Psoas muscle (tissue), 8 donors: ENCODE measurements at regions of chr3 and their contacts with region 1.

Region 1: DNA sequence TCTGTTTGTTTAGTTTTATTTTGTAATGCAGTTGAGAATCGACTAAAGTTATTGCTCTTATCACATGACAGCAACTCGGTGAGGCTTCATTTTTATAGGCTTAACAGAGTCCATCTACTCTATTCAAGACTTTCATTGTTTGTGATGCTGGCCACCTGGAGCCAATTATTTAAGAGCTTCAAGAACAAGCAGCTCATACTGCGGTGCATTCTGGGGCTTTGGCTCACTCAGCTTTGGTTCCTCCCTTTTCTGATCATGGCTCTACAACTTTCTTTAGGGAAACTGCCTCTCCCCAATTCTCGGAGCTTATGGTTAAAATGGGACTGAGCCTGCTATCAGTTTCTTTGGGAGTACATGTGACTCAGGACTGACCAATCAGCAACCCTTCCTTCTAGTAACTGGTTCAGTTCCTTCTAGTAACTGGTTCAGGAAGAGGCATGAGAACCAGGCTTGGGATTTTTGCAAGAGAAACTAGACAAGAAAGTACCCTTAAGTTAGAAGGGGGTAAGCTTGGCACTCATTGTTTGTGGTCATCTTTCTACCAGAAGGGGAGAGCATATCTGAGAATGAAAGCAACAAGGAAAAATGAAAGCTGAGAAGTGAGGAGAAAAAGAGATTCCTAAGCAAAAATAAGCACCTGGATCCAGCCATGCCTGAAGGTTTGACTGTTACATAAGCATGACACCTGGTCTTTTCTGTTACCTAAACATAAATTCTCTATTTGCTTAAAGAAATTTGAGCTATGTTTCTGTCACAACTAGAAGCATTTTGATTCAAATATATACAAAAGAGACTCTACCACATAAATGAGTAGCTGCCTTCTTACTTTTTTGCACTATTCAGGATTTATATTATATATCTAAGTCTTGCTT is 24.1 kb upstream of the ARHGEF3 start:
- DNase-seq: no peak
- ATAC-seq: no peak
- H3K4me3 ChIP-seq: no peak overlapping the region
- H3K27ac ChIP-seq: no peak overlapping the region
- H3K4me1 ChIP-seq: no peaks in the 10 kb centered on the region
- H3K27me3 ChIP-seq: no peaks in the 10 kb centered on the region
- CTCF ChIP-seq: no peak

Region 2: GRCh38 chr3:56837196-56837955 is 11.6 kb after region 1 on chr3:
- intact Hi-C with region 1: loop called in 1 of 2 experiments (anchors 1 kb)
- DNase-seq: no peak
- ATAC-seq: no peak
- H3K4me3 ChIP-seq: no peak overlapping the region
- H3K27ac ChIP-seq: no peak overlapping the region
- H3K4me1 ChIP-seq: no peaks in the 10 kb centered on the region
- H3K27me3 ChIP-seq: no peaks in the 10 kb centered on the region
- CTCF ChIP-seq: no peak

Region 3: DNA sequence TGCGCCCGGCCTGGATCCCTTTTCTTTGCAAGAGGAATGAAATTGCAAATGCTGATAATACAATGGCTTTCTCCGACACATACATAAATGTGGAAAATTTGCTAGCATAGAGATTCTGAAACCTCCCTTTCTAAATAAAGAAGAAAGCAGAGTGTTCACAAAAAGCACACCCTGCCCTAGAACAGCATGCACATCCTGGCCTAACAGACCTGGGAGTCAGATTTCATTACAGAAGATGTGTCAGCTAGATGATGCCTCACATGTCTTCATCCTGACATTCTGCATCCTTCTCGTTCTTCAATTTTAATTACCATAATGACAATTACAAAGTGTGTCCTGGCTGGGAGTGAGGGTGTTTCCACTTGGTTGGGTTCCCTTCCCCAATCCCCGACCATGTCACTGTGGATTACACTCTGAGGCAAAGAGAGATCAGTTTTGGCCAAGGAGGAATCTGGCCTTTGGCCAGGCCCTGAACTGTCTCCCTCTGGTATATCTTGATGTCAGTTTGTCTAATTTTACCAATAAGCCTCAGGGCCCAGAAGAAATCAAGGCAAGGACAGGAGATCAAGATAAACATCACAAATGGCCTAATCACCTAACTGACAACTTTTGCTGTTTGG is 129.8 kb after region 1 on chr3:
- intact Hi-C with region 1: loop called in 1 of 2 experiments (anchors 10 kb)
- DNase-seq: no peak
- ATAC-seq: peak in 2 of 4 donors; percentile 37 to 90
- H3K4me3 ChIP-seq: no peak overlapping the region
- H3K27ac ChIP-seq: no peak overlapping the region
- H3K4me1 ChIP-seq: no peaks in the 10 kb centered on the region
- H3K27me3 ChIP-seq: no peaks in the 10 kb centered on the region
- CTCF ChIP-seq: no peak

Region 4: GRCh38 chr3:56976651-56977560 is 151.1 kb after region 1 on chr3:
- intact Hi-C with region 1: no loop called
- DNase-seq: no peak
- ATAC-seq: no peak
- H3K4me3 ChIP-seq: no peak overlapping the region
- H3K27ac ChIP-seq: no peak overlapping the region
- H3K4me1 ChIP-seq: no peaks in the 10 kb centered on the region
- H3K27me3 ChIP-seq: no peaks in the 10 kb centered on the region
- CTCF ChIP-seq: no peak